ENCODE measurements at regions of chr5 and their contacts with region 1.

Region 1: GRCh38 chr5:71782771-71783770 is 64.0 kb downstream of the CARTPT start:
- DNase-seq: peak; percentile 74
- H3K4me3 ChIP-seq: peak overlapping the region in 2 of 4 donors; percentile 12 to 42
- H3K27ac ChIP-seq: peak overlapping the region; percentile 33 to 61 (median 53)
- H3K4me1 ChIP-seq: peaks cover 0 to 21% (median 4%) of the 10 kb centered on the region in 4 donors
- H3K27me3 ChIP-seq: no peaks in the 10 kb centered on the region
- CTCF ChIP-seq: peak; percentile 71 to 85 (median 78)
- EP300 ChIP-seq: no peak
- POLR2A ChIP-seq: no peak

Region 2: DNA sequence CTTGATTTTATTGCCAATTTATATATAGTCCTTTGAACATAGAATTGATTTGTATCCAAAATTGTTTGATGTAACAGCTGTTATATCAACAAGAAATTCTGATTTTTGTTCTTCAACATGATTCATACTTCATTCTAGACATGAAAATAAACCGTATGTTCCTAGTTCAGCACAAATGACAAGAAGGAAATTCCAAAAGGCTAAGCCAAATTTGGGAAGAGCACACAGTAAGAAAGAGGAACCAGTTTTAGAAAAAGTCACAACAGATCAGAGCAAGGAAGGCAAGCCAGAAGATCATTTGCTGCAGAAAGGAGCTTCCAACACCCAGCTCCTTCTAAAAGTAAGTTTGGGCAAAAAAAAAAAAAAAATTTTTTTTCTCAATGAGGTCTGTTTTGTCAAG is 260.9 kb before region 1 on chr5:
- in situ Hi-C with region 1: no loop called
- intact Hi-C with region 1: no loop called
- DNase-seq: no peak
- H3K4me3 ChIP-seq: no peak overlapping the region
- H3K27ac ChIP-seq: no peak overlapping the region
- H3K4me1 ChIP-seq: no peaks in the 10 kb centered on the region
- H3K27me3 ChIP-seq: no peaks in the 10 kb centered on the region
- CTCF ChIP-seq: no peak
- EP300 ChIP-seq: no peak
- POLR2A ChIP-seq: no peak

Region 3: DNA sequence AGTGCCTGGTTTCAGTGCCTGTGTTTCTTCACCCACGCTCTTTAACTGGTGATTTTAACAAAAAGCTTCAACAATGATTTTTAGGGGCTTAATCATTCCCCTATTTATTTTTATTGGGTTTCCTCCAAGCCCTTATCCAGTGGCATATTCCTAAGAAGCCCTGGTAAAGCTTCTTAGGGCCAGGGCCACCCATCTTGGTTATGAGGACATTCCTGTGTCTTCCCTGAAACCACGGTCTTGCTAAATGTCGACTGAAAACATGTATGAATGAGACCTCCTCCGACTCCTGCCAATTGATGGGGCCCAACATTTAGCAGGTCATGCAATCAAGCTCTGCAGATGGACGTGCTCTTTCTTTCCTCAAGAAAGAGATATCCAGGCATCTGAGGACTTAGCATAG is 77.7 kb before region 1 on chr5:
- in situ Hi-C with region 1: no loop called
- intact Hi-C with region 1: no loop called
- DNase-seq: no peak
- H3K4me3 ChIP-seq: no peak overlapping the region
- H3K27ac ChIP-seq: no peak overlapping the region
- H3K4me1 ChIP-seq: no peaks in the 10 kb centered on the region
- H3K27me3 ChIP-seq: peaks cover 10% of the 10 kb centered on the region
- CTCF ChIP-seq: no peak
- EP300 ChIP-seq: no peak
- POLR2A ChIP-seq: no peak

Region 4: GRCh38 chr5:71794061-71794695 is 11.1 kb after region 1 on chr5:
- in situ Hi-C with region 1: no loop called
- intact Hi-C with region 1: no loop called
- DNase-seq: no peak
- H3K4me3 ChIP-seq: no peak overlapping the region
- H3K27ac ChIP-seq: no peak overlapping the region
- H3K4me1 ChIP-seq: no peaks in the 10 kb centered on the region
- H3K27me3 ChIP-seq: no peaks in the 10 kb centered on the region
- CTCF ChIP-seq: no peak
- EP300 ChIP-seq: no peak
- POLR2A ChIP-seq: no peak

Region 5: DNA sequence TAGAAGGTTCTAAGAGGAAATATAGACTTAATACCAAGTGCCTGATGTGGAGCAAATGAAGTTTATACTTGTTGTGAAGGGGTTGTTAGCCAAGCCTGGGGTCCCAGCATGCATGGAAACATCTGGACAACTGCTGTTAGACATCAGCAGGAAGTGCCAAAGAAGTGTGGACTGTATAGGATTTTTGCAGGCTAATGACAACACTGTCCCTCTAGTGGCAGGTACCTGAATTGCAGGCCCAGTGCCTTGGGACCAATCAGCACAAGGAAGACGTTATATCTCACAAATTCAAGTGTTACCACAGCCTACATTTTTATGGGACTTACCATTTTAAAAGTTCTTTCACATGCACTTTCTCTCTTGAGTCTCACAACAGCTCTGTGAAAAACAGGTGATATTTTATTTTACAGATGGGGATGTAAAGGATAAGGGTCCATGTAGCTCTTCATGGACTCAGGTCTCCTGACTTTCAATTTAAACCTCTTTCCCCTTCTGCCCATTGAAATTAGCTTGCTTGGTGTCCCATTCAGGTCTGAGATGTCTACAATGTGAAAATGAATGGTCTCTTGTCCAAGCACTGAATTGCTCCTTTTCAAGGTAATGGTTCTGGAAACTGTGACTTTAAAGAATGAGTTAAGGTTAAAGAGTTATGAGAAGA is 235.2 kb after region 1 on chr5:
- in situ Hi-C with region 1: loop called in 3 of 4 experiments (anchors 10 to 25 kb)
- intact Hi-C with region 1: no loop called
- DNase-seq: peak; percentile 71
- H3K4me3 ChIP-seq: no peak overlapping the region
- H3K27ac ChIP-seq: no peak overlapping the region
- H3K4me1 ChIP-seq: no peaks in the 10 kb centered on the region
- H3K27me3 ChIP-seq: no peaks in the 10 kb centered on the region
- CTCF ChIP-seq: peak; percentile 85 to 98 (median 91)
- EP300 ChIP-seq: no peak
- POLR2A ChIP-seq: no peak

Region 6: GRCh38 chr5:72307968-72308852 is 525.1 kb after region 1 on chr5:
- in situ Hi-C with region 1: loop called in 2 of 4 experiments (anchors 10 to 25 kb)
- intact Hi-C with region 1: loop called (anchors 5 kb)
- DNase-seq: peak; percentile 98
- H3K4me3 ChIP-seq: peak overlapping the region; percentile 65 to 93 (median 68)
- H3K27ac ChIP-seq: peak overlapping the region; percentile 96 to 98 (median 98)
- H3K4me1 ChIP-seq: peaks cover 0 to 21% (median 6%) of the 10 kb centered on the region in 4 donors
- H3K27me3 ChIP-seq: no peaks in the 10 kb centered on the region
- CTCF ChIP-seq: peak; percentile 74 to 94 (median 83)
- EP300 ChIP-seq: no peak
- POLR2A ChIP-seq: peak; percentile 96

Region 7: DNA sequence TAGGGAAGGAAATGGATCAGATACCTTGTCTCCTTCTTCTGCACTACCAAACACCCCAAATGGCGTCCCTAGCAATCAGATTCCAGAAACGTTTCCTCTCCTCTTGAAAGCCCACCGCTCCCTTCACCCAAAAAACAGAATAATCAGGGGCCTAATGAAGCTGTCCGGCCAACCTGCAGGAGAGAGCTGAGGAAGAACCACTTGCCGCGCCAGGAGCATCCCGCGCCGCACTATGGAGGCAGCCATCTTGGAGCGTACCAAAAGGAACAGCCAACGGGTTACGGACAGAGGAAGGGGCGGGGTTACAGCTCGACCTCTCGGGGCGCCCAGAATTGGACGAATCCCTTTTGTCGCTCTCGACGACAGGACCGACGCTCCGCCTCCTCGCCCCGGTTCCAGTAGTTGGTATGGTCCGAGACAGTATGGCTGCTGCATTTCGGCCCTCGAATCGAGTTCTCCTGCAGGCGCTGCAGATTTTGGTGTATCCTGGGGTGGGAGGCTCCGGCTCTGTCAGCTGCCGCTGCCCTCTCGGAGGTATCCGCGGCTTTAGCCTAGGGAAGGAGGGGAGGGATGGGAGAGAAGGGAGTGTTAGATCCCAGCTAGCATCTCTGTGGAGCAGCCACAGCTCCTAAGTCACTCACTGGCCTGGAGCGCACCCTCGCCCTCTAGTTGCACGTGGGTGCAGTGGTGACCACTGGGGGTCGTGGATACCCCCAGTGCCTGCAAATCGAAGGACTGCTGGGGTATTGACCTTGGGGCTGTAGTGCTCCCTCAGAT is 537.1 kb after region 1 on chr5 and contains the starts of genes MRPS27 and PTCD2:
- in situ Hi-C with region 1: loop called in 2 of 4 experiments (anchors 10 to 25 kb)
- intact Hi-C with region 1: no loop called
- DNase-seq: peak; percentile 97
- H3K4me3 ChIP-seq: peak within 1 kb of the TSS; percentile 57 to 83 (median 65)
- H3K27ac ChIP-seq: peak within 1 kb of the TSS; percentile 77 to 90 (median 82)
- H3K4me1 ChIP-seq: peaks cover 0 to 26% (median 11%) of the 10 kb centered on the region in 4 donors
- H3K27me3 ChIP-seq: no peaks in the 10 kb centered on the region
- CTCF ChIP-seq: peak in 1 of 5 experiments; percentile 21
- EP300 ChIP-seq: no peak
- POLR2A ChIP-seq: peak; percentile 55
- total RNA-seq, gene MRPS27: 14.3 to 34.7 (median 27.9) TPM
- total RNA-seq, gene PTCD2: 1.5 to 9.5 (median 2.9) TPM

Measured in transverse colon (tissue), 4 donors.